Dorsolateral prefrontal cortex (tissue), 120 donors: ENCODE measurements at regions of chr5 and their contacts with region 1.

Region 1: DNA sequence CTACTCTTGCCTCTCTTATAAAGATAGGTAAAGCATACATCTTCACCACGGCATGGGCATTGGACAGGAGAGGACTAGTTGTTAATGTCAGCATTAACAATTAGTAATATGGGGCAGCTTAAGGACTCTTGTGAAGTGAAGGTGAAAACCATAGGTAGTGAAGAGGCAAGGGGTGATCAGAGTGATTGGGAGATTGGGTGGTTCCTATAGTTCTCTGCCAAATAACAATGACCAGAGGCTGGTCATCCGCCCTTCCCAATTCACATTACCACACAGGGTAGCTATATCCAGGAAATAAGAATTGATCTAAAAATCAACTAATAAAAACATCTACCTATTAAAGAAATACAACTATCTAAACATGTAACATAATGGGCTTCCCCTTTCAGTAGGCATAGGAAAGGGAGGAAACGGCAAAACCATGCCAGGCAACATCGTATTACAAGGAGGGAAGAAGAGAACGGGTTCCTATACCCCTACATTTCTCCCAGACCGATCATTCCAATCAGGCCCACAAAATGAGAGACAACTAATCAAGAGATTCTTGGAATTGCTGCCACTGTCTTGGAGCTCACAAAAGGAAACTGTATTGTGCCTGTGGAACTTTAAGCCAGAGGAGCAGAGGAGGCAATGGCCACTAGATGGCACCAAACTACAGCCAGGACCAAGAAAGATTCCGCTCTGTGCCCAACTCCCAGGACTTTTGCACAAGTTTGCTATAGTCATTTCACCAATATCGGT is 121.6 kb downstream of the FBXL17 start:
- DNase-seq: peak; percentile 46 to 84 (median 70)
- H3K4me3 ChIP-seq: peak overlapping the region in 21 of 59 donors; percentile 7 to 48 (median 29)
- H3K27ac ChIP-seq: no peak overlapping the region
- H3K27me3 ChIP-seq: no peaks in the 10 kb centered on the region
- CTCF ChIP-seq: peak; percentile 83 to 98 (median 92)

Region 2: GRCh38 chr5:108345541-108346171 is 85.4 kb after region 1 on chr5:
- intact Hi-C with region 1: loop called (anchors 2 kb)
- DNase-seq: no peak
- H3K4me3 ChIP-seq: no peak overlapping the region
- H3K27ac ChIP-seq: no peak overlapping the region
- H3K27me3 ChIP-seq: no peaks in the 10 kb centered on the region
- CTCF ChIP-seq: peak; percentile 34 to 79 (median 60)

Region 3: DNA sequence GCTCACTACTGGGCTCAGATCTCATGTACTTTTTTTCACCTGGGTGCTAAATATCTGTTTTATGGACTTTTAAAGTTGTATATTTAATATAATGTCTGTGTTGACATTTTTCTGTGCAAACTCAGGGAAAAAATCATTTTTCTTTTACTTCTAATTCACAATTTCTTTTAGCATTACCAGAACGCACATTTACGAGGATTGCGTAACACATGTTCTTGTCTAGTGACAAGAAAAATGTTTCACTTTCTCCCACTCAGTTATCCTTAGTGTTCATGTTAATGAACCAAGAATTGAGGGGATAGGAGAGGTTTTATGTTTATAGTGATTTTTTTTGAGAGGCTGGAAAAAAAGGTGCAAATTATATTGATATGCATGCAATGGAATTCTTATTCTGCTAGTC is 1235.8 kb after region 1 on chr5:
- intact Hi-C with region 1: no loop called
- DNase-seq: no peak
- H3K4me3 ChIP-seq: no peak overlapping the region
- H3K27ac ChIP-seq: no peak overlapping the region
- H3K27me3 ChIP-seq: no peaks in the 10 kb centered on the region
- CTCF ChIP-seq: no peak